H1 (cell line): ENCODE measurements at regions of chr22 and their contacts with region 1.

Region 1: DNA sequence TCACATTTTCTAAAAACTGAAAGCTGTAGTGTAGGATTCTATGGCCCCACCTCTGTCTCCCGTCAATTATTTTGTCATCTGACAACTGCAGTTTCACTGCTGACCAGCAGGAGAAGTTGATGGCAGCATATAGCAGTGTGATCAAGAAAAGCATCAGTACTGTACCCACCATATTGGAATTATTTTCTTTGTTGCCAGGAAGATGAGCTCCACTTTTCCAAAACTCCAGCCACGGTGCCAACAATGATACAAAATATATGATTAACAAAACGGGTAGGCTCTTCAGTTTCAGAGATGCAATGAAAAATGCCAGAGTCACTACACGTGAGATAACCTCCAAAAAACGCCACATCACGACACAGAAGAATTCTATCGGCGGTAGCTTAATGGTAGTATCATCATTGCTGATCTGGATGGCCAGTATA is 41.3 kb downstream of the XKR3 start:
- DNase-seq: peak in 1 of 2 experiments; percentile 51
- H3K4me3 ChIP-seq: no peak overlapping the region
- H3K27ac ChIP-seq: no peak overlapping the region
- H3K4me1 ChIP-seq: no peaks in the 10 kb centered on the region
- H3K27me3 ChIP-seq: no peaks in the 10 kb centered on the region
- CTCF ChIP-seq: peak; percentile 28 to 74 (median 55)
- EP300 ChIP-seq: no peak
- POLR2A ChIP-seq: no peak
- RAD21 ChIP-seq: peak; percentile 48 to 62

Region 2: DNA sequence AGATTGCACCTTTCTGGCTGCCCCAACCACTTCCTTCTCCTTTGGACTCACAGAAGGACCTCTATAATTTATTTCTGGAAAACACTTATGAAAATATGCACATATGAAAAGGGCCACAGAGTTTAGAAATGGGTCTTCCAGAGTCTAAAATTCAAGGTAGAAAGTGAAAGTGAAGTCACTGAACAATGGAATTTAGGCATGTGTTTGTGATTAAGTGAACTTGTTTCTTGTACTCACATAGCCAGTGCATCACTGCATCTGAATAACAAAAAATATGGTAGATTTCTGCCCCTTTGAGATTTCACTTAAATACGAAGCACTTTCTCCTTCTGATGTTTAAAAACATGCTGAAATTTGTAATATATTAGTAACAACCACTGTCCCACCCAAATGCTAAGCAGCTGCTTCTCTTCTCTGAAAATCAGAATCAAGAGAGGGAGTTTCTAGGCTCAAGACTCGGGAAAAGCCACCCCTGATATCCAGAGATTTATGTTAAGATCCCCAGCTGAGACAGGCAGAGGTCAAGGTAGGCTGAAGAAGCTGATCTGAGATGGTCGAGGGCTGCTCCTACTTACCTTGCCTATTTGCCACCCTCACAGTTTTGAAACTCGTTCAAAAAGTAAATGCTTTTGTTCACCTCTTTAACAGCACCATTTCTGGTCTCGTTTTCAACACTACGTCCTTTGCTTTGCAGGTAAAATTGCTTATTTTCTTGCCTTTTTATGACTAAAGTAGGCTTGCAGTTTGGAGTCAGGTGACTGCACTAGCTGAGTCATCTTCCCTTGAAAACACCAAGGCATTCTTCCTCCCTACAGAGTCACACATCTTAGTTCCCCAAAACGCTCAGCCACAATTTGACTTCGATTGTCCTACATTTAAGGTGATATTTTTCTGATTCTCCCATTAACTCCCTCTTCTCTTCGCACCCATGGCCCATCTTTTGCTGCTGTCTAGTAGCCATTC is 41.1 kb after region 1 on chr22 and contains the start of gene XKR3:
- CTCF ChIA-PET with region 1: interaction called, 10 read pairs
- POLR2A ChIA-PET with region 1: no interaction called
- DNase-seq: no peak
- H3K4me3 ChIP-seq: no peak within 1 kb of the TSS
- H3K27ac ChIP-seq: no peak within 1 kb of the TSS
- H3K4me1 ChIP-seq: peaks cover 0 to 6% (median 4%) of the 10 kb centered on the region in 4 experiments; a peak in 6 of 7 replicates
- H3K27me3 ChIP-seq: no peaks in the 10 kb centered on the region
- CTCF ChIP-seq: no peak
- EP300 ChIP-seq: no peak
- POLR2A ChIP-seq: no peak
- RAD21 ChIP-seq: no peak
- total RNA-seq, gene XKR3: 0.17 and 0.25 TPM in 2 replicates

Region 3: DNA sequence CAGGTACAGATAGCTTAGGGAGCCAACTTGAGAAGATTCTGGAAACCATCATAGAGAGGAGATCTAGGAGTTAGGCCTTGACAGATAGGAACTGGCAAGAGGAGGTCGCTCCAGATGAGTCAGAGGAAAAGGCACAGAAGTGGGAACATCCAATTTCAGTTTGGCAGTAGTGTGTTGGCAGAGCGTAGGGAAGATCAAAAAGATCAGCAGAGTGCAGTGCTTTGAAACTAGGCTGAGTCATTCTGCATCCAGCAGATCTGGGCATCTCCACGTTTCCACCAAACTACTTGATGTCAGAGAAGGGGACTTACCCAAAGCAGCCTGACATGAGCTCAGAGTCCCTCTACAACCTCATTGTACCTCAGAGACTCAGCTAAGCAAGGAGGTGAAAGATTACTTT is 165.6 kb after region 1 on chr22:
- CTCF ChIA-PET with region 1: no interaction called
- POLR2A ChIA-PET with region 1: no interaction called
- DNase-seq: no peak
- H3K4me3 ChIP-seq: no peak overlapping the region
- H3K27ac ChIP-seq: no peak overlapping the region
- H3K4me1 ChIP-seq: no peaks in the 10 kb centered on the region
- H3K27me3 ChIP-seq: 0 out of 7 replicates have a peak, but pooled peaks cover 0 to 3% (median 0%) of the 10 kb centered on the region in 4 experiments
- CTCF ChIP-seq: no peak
- EP300 ChIP-seq: no peak
- POLR2A ChIP-seq: no peak
- RAD21 ChIP-seq: no peak